Activated naive CD4-positive, alpha-beta T cell treated with anti-CD3 and anti-CD28 coated beads, Interleukin-2, amount 10 ng/mL, durations not matched to agents 7 days and 5 days (primary cell): ENCODE measurements at regions of chr17 and their contacts with region 1.

Region 1: DNA sequence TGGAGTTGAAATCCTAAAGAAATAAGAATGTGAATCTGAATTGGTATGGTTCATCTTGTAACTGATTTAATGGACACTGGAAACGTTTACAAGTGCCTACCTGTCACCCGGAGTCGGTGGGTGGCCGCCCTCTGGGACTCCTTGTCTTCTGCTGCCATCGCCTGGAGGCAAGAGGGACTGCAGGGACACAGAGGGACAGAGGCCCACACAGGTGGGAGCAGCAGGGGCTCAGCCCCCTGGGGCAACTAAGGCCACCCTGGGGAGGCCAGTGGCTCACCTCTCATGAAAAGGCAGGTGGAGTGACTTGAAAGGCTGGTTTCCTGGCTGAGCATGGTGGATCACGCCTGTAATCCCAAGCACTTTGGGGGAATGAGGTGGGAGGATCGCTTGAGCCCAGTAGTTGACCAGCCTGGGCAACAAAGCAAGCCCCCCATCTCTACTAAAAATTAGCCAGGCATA is 23.2 kb downstream of the TMEM92 start:
- DNase-seq: peak; percentile 85
- H3K4me3 Mint-ChIP-seq: no peak overlapping the region
- H3K27ac Mint-ChIP-seq: no peak overlapping the region
- H3K4me1 Mint-ChIP-seq: no peaks in the 10 kb centered on the region
- H3K27me3 Mint-ChIP-seq: peaks cover 30% of the 10 kb centered on the region

Region 2: DNA sequence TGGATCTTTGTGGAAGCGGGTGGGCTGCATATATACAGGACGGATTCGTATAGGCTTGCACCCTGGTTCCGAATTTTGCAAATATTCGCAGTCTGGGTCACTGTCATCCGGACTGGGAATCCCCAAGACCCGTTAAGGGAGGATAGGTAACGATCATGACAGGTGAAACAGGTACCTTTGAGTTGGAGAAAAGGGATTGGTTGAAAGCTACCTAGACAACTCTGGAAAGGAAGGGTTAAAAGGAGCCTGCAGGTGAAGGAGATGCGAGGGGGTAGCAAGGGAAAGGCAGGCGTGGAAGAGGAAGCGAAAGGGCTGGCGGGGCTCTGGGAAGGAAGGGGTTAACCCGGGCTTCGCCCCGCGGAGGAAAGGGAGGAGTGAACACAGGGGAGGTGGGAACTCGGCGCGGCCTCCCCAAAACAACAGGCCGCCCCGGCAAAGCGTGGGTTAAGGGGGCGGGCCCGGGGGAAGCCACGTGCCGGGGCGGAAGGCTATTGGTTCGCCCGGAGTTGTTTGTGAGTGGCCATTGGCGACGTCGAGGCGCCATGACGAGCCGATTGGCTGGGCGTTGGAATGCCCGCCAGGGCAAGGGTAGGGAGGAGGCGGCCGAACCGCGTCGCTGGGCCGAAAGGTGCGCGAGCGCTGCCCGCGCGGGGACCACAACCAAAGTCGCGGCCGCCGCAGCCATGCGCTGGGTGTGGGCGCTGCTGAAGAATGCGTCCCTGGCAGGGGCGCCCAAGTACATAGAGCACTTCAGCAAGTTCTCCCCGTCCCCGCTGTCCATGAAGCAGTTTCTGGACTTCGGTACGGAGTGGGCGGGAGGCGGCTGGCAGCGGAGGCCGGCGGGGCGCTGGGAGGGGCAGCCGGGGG is 202.4 kb before region 1 on chr17 and contains the start of gene PDK2:
- CTCF ChIA-PET with region 1: interaction called, 12 read pairs
- DNase-seq: peak; percentile 97
- H3K4me3 Mint-ChIP-seq: peak within 1 kb of the TSS; percentile 97
- H3K27ac Mint-ChIP-seq: peak within 1 kb of the TSS; percentile 94
- H3K4me1 Mint-ChIP-seq: peaks cover 34% of the 10 kb centered on the region
- H3K27me3 Mint-ChIP-seq: peaks cover 5% of the 10 kb centered on the region

Region 3: GRCh38 chr17:50169121-50169764 is 128.2 kb before region 1 on chr17:
- CTCF ChIA-PET with region 1: interaction called, 13 read pairs
- DNase-seq: peak; percentile 68
- H3K4me3 Mint-ChIP-seq: peak overlapping the region; percentile 17
- H3K27ac Mint-ChIP-seq: peak overlapping the region; percentile 6
- H3K4me1 Mint-ChIP-seq: peaks cover 16% of the 10 kb centered on the region
- H3K27me3 Mint-ChIP-seq: peaks cover 49% of the 10 kb centered on the region

Region 4: GRCh38 chr17:50213026-50214022 is 84.1 kb before region 1 on chr17:
- CTCF ChIA-PET with region 1: interaction called, 11 read pairs
- DNase-seq: peak; percentile 70
- H3K4me3 Mint-ChIP-seq: no peak overlapping the region
- H3K27ac Mint-ChIP-seq: no peak overlapping the region
- H3K4me1 Mint-ChIP-seq: peaks cover 11% of the 10 kb centered on the region
- H3K27me3 Mint-ChIP-seq: peaks cover 79% of the 10 kb centered on the region

Region 5: GRCh38 chr17:50269477-50270434 is 27.7 kb before region 1 on chr17:
- CTCF ChIA-PET with region 1: interaction called, 48 read pairs
- DNase-seq: peak; percentile 81
- H3K4me3 Mint-ChIP-seq: no peak overlapping the region
- H3K27ac Mint-ChIP-seq: no peak overlapping the region
- H3K4me1 Mint-ChIP-seq: peaks cover 14% of the 10 kb centered on the region
- H3K27me3 Mint-ChIP-seq: peaks cover 63% of the 10 kb centered on the region

Region 6: DNA sequence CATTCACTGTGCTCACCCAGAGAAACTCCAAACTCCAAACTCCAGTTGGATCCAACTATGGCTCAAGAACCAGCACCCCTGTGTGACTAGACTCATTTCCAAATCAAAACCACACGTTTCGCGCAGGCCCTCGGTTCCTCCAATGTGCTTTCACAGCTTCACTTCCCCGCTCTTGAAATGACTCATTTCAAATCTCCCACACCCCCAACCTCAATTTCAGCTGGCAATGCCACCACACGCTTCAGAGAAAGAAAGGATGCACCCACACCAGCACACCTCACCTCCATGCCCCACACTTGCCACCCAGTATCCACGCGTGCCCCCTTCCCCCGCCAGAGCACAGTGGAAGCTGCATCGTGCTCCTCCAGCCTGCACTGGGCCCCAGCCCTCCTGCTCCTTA is 14.2 kb before region 1 on chr17:
- CTCF ChIA-PET with region 1: interaction called, 24 read pairs
- DNase-seq: peak; percentile 39
- H3K4me3 Mint-ChIP-seq: no peak overlapping the region
- H3K27ac Mint-ChIP-seq: no peak overlapping the region
- H3K4me1 Mint-ChIP-seq: peaks cover 6% of the 10 kb centered on the region
- H3K27me3 Mint-ChIP-seq: peaks cover 62% of the 10 kb centered on the region